Esophagus squamous epithelium (tissue), 5 donors: ENCODE measurements at regions of chr21 and their contacts with region 1.

Region 1: GRCh38 chr21:39221282-39221996 is 38.2 kb upstream of the PSMG1 start:
- DNase-seq: no peak
- H3K4me3 ChIP-seq: no peak overlapping the region
- H3K27ac ChIP-seq: no peak overlapping the region
- H3K4me1 ChIP-seq: no peaks in the 10 kb centered on the region
- H3K27me3 ChIP-seq: no peaks in the 10 kb centered on the region
- CTCF ChIP-seq: no peak
- POLR2A ChIP-seq: no peak

Region 2: GRCh38 chr21:39281207-39281606 is 59.8 kb after region 1 on chr21:
- intact Hi-C with region 1: no loop called
- DNase-seq: no peak
- H3K4me3 ChIP-seq: no peak overlapping the region
- H3K27ac ChIP-seq: no peak overlapping the region
- H3K4me1 ChIP-seq: no peaks in the 10 kb centered on the region
- H3K27me3 ChIP-seq: no peaks in the 10 kb centered on the region
- CTCF ChIP-seq: no peak
- POLR2A ChIP-seq: no peak

Region 3: DNA sequence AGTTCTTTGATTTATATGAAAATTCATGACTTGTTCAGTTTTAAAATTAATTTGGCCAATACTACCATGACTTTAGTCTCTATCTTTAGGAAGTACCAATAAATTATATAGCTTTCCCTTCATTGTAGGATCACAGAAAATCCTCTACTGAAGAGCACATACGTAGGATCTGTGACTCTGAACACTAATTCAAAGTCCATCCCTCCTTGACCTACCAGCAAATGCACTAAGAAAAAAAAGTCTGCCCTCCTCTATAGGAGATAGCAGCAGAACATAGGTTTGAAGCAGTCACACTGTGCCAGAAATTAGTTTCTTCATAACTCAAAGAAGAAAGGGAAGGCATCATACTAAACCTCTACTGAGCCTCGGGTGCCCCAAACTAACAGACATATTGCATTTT is 75.5 kb after region 1 on chr21:
- intact Hi-C with region 1: loop called (anchors 10 kb)
- DNase-seq: no peak
- H3K4me3 ChIP-seq: no peak overlapping the region
- H3K27ac ChIP-seq: no peak overlapping the region
- H3K4me1 ChIP-seq: peaks cover 0 to 15% (median 0%) of the 10 kb centered on the region in 3 donors
- H3K27me3 ChIP-seq: no peaks in the 10 kb centered on the region
- CTCF ChIP-seq: no peak
- POLR2A ChIP-seq: no peak

Region 4: DNA sequence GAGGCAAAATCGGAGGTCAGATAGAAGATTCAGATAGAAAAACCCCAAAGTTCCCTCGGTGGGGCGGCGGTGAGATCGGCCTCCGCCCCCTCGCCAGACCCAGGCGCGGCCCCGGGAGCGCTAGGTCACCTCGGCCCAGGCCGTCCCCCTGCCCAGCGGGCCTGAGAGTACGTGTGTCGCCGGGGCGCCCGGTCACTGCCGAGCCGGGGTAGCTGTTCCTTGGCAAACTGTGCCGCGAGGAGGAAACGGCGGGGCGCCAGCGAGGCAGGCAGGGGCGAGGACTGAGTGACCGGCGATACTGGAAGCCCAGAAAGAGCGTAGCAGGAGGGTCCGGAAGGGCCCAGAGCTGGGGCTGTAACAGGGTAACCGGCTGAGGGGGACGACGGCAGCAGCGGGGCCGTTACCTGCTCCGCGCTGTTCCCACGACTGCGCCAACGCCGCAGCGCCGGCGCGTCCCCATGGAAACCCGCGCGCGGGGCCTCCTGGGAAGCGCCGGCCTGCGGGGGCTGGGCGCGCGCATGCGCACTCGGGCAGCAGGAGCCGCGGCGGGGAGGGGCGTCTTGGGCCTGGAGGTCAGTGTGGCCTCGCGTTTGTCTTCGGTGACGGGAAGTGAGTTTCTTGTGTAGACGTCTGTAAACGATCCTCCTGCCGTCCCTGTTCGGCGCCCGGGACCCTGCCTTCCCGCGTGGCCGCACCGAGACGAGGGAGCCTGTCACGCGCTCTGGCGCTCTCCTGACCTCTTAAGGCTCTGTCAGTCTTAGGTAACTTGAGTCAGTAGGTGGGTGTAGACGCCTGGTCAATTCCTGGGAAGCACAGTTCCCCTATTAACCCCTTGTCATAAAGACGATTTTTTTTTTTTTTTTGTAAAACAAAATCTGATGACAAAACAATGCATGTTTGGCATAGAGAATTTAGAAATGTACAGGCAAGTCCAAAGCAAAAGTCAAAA is 224.2 kb after region 1 on chr21 and contains the start of gene LCA5L:
- intact Hi-C with region 1: no loop called
- DNase-seq: peak; percentile 39
- H3K4me3 ChIP-seq: peak within 1 kb of the TSS; percentile 63 to 79 (median 76)
- H3K27ac ChIP-seq: peak within 1 kb of the TSS; percentile 85 to 93 (median 92)
- H3K4me1 ChIP-seq: peaks cover 3 to 19% (median 5%) of the 10 kb centered on the region in 3 donors
- H3K27me3 ChIP-seq: no peaks in the 10 kb centered on the region
- CTCF ChIP-seq: peak in 4 of 6 experiments; percentile 4 to 26 (median 18)
- POLR2A ChIP-seq: peak in 3 of 4 donors; percentile 39 to 62 (median 60)
- total RNA-seq, gene LCA5L: 0.44 to 1.7 (median 0.82) TPM in 3 of 4 donors, not detected in the other